Endothelial cell of umbilical vein (primary cell): ENCODE measurements at regions of chr6 and their contacts with region 1.

Region 1: GRCh38 chr6:112216699-112217551 is 37.4 kb downstream of the LAMA4 start:
- DNase-seq: peak; percentile 96
- H3K4me3 ChIP-seq: no peak overlapping the region
- H3K27ac ChIP-seq: peak overlapping the region; percentile 96
- H3K4me1 ChIP-seq: peaks cover 81% of the 10 kb centered on the region
- H3K27me3 ChIP-seq: no peaks in the 10 kb centered on the region
- CTCF ChIP-seq: no peak
- POLR2A ChIP-seq: peak; percentile 93

Region 2: DNA sequence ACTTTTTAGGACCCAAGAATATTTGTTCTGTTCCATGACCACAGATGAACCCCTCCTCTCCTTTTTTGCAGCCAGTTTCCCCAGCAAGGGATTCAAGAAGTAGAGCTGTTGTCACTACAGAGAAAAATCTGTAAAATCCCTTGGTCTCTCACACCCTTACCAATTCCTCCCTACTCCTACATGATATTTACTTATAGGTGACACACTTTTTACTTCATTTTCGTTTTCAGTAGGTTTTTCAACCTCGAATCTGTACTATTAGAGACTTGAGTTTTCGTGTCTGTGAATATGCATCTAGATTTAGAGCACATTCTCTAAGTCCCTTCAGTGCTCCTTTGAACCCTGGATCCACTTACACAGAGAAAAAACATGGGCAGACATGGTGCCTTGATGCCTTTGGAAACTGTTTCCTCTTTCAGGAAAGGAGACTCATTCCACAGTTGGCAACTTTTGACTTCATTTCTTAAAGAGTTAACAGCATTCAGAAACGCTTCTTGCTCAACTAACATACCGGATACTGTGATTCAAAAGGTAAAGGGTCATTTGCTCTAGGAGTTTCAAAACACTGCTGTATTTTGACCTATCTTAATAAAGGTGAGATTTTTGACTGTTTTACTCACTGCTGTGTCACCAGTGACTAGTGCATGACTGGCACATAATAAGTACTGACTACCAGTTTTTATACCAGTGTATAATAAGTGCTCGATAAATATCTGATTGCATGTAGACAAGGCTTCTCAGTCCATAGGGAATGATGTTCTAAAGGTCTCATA is 13.2 kb before region 1 on chr6:
- CTCF ChIA-PET with region 1: interaction called, 4 read pairs
- POLR2A ChIA-PET with region 1: interaction called, 3 read pairs
- dilution Hi-C with region 1: no loop called
- intact Hi-C with region 1: loop called (anchors 1 kb)
- DNase-seq: peak; percentile 94
- H3K4me3 ChIP-seq: no peak overlapping the region
- H3K27ac ChIP-seq: peak overlapping the region; percentile 87
- H3K4me1 ChIP-seq: peaks cover 77% of the 10 kb centered on the region
- H3K27me3 ChIP-seq: no peaks in the 10 kb centered on the region
- CTCF ChIP-seq: no peak
- POLR2A ChIP-seq: no peak

Region 3: DNA sequence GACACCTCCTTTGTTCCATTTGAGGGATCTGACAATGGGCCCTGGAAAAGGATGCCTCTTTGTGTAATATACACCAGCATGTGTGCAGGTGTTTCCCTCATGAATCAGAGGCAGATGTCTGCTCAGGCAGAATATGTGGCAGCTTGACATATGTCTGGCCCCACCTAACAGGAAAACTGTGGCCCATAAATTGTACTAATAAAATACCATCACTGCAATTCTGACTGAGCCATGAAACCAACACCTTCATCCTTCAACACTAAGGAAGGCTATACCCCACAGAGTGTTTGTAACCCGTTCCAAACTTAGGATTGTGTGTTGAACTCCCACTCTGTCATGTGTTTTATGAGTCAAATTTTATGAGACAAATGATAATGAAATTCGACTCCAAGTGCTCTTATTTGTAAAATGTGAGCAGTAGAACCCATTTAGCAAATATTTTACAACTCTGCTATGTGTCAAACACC is 14.7 kb after region 1 on chr6:
- CTCF ChIA-PET with region 1: interaction called, 17 read pairs
- POLR2A ChIA-PET with region 1: interaction called, 25 read pairs
- dilution Hi-C with region 1: no loop called
- intact Hi-C with region 1: loop called (anchors 1 kb)
- DNase-seq: peak; percentile 95
- H3K4me3 ChIP-seq: no peak overlapping the region
- H3K27ac ChIP-seq: peak overlapping the region; percentile 99
- H3K4me1 ChIP-seq: peaks cover 93% of the 10 kb centered on the region
- H3K27me3 ChIP-seq: no peaks in the 10 kb centered on the region
- CTCF ChIP-seq: no peak
- POLR2A ChIP-seq: no peak